ENCODE measurements at regions of chr10 and their contacts with region 1.

Region 1: DNA sequence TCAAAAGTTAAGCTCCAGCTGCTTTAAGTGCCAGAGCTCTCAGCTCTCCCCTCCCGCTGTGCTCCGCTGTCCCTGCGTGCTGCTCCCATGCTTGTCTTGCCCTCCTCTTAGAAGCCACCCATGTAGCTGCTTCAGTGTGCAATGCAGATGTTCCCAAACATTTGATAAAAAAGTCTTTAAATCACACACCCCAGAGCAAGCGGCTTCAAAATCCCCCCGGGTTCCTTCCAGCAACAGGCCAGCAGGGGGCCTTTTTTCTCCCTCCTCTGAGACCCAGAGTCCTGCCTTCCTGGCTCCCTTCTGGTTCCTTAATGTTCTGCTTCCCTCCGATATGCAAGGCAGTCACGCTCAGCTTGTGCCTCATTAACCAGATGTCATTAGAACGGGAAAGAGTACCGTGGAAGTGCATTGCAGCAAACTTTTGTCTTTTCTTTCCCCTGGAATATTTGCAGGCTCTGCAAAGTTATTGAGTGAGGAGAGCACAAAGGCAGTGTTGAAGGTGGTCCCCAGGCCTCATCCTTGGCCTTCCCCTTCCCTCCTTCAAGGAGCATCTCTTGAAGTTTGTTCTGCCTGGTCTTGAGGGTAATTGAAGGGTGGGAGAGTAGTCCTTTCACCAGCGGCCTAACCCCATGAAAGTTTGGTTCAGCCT is 25.5 kb downstream of the LDB3 start:
- DNase-seq: peak; percentile 75
- H3K4me3 ChIP-seq: no peak overlapping the region
- H3K27ac ChIP-seq: no peak overlapping the region
- H3K4me1 ChIP-seq: peaks cover 0 to 6% of the 10 kb centered on the region in 2 experiments; a peak in 1 of 4 replicates
- H3K27me3 ChIP-seq: no peaks in the 10 kb centered on the region
- CTCF ChIP-seq: peak; percentile 75
- EP300 ChIP-seq: no peak
- RAD21 ChIP-seq: peak; percentile 64

Region 2: GRCh38 chr10:86569335-86569734 is 124.5 kb before region 1 on chr10:
- CTCF ChIA-PET with region 1: no interaction called
- POLR2A ChIA-PET with region 1: no interaction called
- DNase-seq: no peak
- H3K4me3 ChIP-seq: no peak overlapping the region
- H3K27ac ChIP-seq: no peak overlapping the region
- H3K4me1 ChIP-seq: no peaks in the 10 kb centered on the region
- H3K27me3 ChIP-seq: no peaks in the 10 kb centered on the region
- CTCF ChIP-seq: no peak
- EP300 ChIP-seq: no peak
- RAD21 ChIP-seq: no peak

Region 3: GRCh38 chr10:86678999-86679792 is 14.6 kb before region 1 on chr10:
- CTCF ChIA-PET with region 1: interaction called, 10 read pairs
- POLR2A ChIA-PET with region 1: no interaction called
- DNase-seq: no peak
- H3K4me3 ChIP-seq: no peak overlapping the region
- H3K27ac ChIP-seq: no peak overlapping the region
- H3K4me1 ChIP-seq: peaks cover 0 to 31% of the 10 kb centered on the region in 2 experiments; a peak in 1 of 4 replicates
- H3K27me3 ChIP-seq: no peaks in the 10 kb centered on the region
- CTCF ChIP-seq: no peak
- EP300 ChIP-seq: no peak
- RAD21 ChIP-seq: no peak